ENCODE measurements at regions of chr19 and their contacts with region 1.

Region 1: DNA sequence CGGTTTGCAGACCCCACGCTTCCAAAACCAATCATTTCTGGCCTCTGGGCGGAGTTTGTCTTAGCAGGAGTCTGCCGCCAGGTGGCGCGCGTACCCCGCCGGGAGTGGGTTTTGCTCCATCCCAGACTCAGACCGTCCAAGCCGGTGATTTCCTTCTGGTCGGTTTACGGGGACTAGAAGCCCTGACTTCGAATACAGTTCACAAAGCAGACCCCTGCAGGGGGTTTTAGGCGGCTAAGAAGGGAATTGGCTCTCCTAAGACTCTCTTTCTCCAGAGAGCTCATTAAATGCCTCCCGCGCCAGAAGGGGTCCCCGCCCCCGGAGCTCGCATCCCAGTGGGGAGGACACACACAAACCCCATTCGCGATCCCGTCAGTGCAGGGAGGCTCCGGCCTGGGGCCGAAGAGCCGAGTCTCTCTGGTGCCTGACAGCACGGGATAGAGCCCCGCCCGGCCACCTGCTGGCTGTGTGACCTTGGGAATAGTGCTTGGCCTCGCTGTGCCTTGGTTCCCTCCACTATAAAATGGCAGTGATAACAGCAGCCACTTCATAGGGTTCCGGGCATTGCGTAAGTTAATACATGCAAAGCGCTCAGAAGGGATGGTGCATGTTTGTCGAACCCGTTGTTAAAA is 8.6 kb upstream of the NUP62 start:
- DNase-seq: peak; percentile 94
- H3K4me3 Mint-ChIP-seq: no peak overlapping the region
- H3K27ac Mint-ChIP-seq: no peak overlapping the region
- H3K4me1 Mint-ChIP-seq: peaks cover 10% of the 10 kb centered on the region
- H3K27me3 Mint-ChIP-seq: peaks cover 12% of the 10 kb centered on the region

Region 2: GRCh38 chr19:49971991-49972411 is 34.1 kb after region 1 on chr19:
- intact Hi-C with region 1: no loop called
- DNase-seq: no peak
- H3K4me3 Mint-ChIP-seq: no peak overlapping the region
- H3K27ac Mint-ChIP-seq: no peak overlapping the region
- H3K4me1 Mint-ChIP-seq: no peaks in the 10 kb centered on the region
- H3K27me3 Mint-ChIP-seq: no peaks in the 10 kb centered on the region

Region 3: DNA sequence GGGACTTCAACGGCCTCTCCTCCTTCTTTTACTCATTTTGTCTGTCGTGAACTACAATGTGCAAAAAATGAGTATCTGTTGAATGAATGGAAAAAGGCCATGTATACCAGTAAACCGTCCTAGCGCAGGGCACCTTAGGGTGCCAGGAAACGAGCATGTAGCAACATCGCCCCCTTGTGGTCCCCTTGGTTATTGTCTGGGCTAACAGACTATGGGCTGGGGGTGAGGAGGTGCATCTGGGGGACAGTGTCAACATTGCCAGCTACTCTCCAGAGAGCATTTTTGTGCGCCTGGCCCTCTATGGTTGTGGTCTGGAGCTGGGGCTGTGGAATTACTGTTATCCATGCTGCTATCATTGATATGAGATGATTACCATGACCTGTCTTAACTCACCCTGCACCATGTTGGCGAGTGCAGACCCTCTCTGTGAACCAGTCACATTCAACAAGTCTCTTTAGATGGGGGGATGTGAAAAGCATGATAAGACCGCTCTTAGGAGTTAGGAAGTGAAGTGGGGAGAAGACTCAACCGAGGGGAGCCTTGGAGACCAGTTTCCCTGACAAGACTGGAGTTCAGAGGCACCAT is 45.9 kb after region 1 on chr19:
- intact Hi-C with region 1: loop called (anchors 1 kb)
- DNase-seq: peak; percentile 93
- H3K4me3 Mint-ChIP-seq: no peak overlapping the region
- H3K27ac Mint-ChIP-seq: no peak overlapping the region
- H3K4me1 Mint-ChIP-seq: peaks cover 9% of the 10 kb centered on the region
- H3K27me3 Mint-ChIP-seq: no peaks in the 10 kb centered on the region

Region 4: DNA sequence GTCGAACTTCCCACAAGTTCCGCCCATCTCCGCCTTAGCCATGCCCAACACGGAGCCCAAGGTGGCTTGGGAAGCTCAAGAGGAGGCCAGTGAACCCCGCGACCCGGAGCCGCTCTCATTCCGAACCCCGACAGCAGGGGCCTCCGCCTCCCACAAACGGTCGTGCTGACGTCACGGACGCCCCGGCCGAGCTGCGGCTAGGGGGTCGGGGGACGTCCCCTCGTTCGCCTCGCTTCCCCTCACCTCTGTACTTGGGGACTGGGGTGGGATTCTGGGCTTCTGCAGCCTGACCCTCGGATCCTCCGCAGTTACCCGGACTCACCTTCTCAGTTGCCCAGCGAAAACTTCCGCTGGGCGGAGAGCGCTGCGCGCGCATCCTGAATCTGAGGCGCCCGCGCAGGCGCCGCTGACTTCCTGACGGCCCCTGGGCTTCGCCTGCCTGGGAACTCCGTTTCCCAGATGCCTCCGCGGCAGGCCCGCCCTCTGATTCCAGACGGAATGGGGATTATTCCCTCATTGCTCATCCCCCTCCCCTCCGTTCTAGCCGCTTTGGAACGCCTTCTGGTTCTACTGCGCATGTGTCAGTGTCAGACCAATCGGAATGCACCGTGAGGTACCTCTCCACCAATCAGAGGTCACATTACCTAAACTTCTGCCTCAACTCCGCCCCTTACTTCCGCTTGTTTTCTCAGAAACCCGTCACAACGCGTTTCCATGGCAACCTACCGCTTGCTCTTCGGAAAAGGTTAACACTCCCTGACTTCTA is 87.3 kb after region 1 on chr19 and contains the start of gene VRK3:
- intact Hi-C with region 1: loop called (anchors 5 kb)
- DNase-seq: peak; percentile 100
- H3K4me3 Mint-ChIP-seq: peak within 1 kb of the TSS; percentile 95
- H3K27ac Mint-ChIP-seq: peak within 1 kb of the TSS; percentile 99
- H3K4me1 Mint-ChIP-seq: peaks cover 34% of the 10 kb centered on the region
- H3K27me3 Mint-ChIP-seq: peaks cover 2% of the 10 kb centered on the region
- total RNA-seq, gene VRK3: 66.1 and 70.0 TPM in 2 replicates

Measured in activated CD4-positive, alpha-beta T cell treated with anti-CD3 and anti-CD28 coated beads, Interleukin-2, amount 10 ng/mL, durations not matched to agents 24 days and 14 days (primary cell).